ENCODE measurements at regions of chr11 and their contacts with region 1.

Region 1: DNA sequence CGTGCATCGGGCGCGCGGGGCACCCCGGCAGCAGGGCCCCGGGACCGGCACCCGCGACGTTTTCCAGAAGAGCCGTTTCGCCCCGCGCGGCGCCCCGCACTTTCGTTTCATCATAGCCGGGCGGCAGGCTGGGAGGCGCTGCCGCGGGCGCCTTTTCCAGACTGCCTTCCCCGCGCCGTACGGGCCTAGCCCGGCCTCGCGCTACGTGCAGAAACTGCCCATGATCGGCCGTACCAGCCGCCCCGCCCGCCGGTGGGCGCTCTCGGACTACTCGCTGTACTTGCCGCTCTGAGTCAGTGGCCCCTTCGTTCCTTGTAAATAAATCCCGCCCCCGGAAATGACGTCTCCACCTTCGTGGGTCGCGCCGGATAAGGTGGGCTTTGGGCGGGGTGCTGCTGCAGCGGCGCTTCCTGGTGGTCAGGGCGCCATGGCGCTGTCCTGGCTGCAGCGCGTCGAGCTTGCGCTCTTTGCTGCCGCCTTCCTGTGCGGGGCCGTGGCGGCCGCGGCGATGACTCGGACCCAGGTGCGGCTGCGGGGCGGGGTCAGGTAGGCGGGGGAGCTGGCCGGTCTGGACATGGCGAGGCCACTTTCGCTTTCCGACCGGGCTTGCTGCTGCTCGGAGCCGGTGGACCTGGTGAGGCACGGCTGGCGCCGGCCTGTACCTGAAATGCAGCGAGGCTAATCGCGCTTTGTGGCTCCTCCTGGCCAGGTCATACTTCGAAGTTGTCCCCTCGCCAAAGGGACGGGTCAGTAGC is at the start of gene TMEM179B:
- DNase-seq: peak; percentile 100
- ATAC-seq: peak; percentile 75
- H3K4me3 Mint-ChIP-seq: peak within 1 kb of the TSS; percentile 95
- H3K27ac Mint-ChIP-seq: peak within 1 kb of the TSS; percentile 95
- H3K4me1 Mint-ChIP-seq: peaks cover 41% of the 10 kb centered on the region
- H3K27me3 Mint-ChIP-seq: no peaks in the 10 kb centered on the region
- CTCF ChIP-seq: peak; percentile 69
- total RNA-seq, gene TMEM179B: 18.6 to 19.5 TPM

Region 2: GRCh38 chr11:62726915-62727763 is 60.0 kb before region 1 on chr11 and contains the start of gene HNRNPUL2:
- CTCF ChIA-PET with region 1: interaction called, 11 read pairs
- POLR2A ChIA-PET with region 1: interaction called, 5 read pairs
- intact Hi-C with region 1: no loop called
- DNase-seq: peak; percentile 98
- ATAC-seq: peak; percentile 92
- H3K4me3 Mint-ChIP-seq: peak within 1 kb of the TSS; percentile 95
- H3K27ac Mint-ChIP-seq: peak within 1 kb of the TSS; percentile 99
- H3K4me1 Mint-ChIP-seq: peaks cover 43% of the 10 kb centered on the region
- H3K27me3 Mint-ChIP-seq: no peaks in the 10 kb centered on the region
- CTCF ChIP-seq: no peak
- total RNA-seq, gene HNRNPUL2: 54.9 to 58.6 TPM

Region 3: DNA sequence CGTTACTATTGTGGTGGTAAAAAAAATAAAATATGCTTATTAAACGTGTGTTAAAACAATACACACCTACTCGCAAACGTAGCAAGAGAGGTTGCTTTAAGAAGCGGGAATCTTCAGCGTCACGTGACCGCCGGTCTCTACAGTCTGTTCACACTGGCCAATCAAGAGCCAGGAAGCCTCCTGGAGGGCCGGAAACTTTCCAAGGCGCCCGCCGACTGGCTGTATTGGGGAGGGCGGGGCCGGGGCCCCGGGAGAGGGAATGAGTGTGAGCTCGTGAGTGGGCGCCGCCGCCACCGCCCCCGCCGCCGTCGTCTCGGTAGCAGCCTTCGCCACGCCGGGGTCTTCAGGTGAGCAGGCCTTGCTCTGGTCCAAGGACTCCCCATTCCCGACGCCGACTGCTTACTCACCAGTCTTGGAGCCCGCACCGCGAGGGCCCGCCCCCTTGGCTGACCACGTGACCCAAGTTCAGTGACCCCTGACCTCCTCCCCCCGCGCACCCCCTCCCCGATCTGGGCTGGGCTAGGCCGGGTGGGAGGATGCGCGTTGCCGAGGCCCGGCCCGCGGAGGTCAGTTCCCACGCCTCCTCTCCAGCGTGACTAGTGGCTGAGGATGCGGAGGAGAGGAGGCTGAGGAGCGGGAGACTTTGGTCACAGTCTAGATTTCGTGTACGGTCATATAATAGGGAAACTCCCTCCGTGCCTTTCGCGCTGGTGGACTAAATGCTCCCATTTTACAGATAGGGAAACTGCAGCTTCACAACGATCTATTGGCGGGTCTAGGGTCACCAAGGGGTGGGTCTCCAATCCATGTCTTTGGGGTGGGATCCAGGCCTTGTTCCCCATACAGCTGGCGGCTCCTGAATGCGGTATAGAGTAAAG is 15.8 kb before region 1 on chr11 and contains the start of gene TAF6L:
- CTCF ChIA-PET with region 1: interaction called, 74 read pairs
- POLR2A ChIA-PET with region 1: interaction called, 25 read pairs
- intact Hi-C with region 1: no loop called
- DNase-seq: peak; percentile 97
- ATAC-seq: peak; percentile 88
- H3K4me3 Mint-ChIP-seq: peak within 1 kb of the TSS; percentile 81
- H3K27ac Mint-ChIP-seq: peak within 1 kb of the TSS; percentile 93
- H3K4me1 Mint-ChIP-seq: peaks cover 21% of the 10 kb centered on the region
- H3K27me3 Mint-ChIP-seq: no peaks in the 10 kb centered on the region
- CTCF ChIP-seq: no peak
- total RNA-seq, gene TAF6L: 13.7 to 16.7 TPM

Region 4: DNA sequence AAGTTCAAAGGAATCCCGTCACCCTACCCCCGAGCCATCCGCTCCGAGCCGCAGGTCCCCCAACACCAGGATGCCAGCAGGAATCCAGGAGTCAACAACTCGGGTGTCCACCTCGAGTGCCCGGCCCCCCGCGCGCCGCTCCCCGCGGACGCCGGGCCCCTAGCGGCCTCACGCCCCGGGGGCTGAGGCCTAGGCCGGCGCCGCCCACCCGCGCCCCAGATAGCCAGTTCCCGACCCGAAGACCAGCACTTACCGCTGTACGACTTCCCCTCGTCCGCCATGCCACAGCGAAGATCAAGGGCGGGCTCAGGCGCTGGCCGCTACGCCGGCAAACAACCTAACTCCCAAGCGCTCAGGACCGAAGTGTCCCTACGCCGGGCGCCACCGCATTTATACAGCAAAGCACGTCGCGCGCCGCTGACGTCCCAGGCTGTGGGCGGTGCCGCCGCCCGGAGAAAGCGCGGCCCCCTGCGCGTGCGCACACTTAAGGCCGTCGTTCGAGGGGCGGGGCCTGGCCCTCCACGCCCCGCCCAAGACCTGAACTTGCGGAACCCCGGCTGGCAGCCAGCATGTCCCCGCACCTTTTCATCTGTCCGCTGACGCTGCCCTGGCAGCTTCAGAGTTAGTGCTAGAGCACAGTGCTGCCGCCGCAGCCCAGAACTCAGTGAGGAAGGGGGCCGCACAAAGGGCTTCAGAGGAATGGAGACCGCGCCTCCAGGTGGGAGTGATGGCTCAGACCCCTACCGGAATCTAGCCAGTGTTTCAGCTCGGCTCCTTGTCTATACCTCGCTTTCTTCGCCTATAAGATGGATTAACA is 18.1 kb after region 1 on chr11 and contains the start of gene NXF1:
- CTCF ChIA-PET with region 1: interaction called, 28 read pairs
- POLR2A ChIA-PET with region 1: interaction called, 228 read pairs
- intact Hi-C with region 1: no loop called
- DNase-seq: peak; percentile 95
- ATAC-seq: peak; percentile 85
- H3K4me3 Mint-ChIP-seq: peak within 1 kb of the TSS; percentile 95
- H3K27ac Mint-ChIP-seq: peak within 1 kb of the TSS; percentile 98
- H3K4me1 Mint-ChIP-seq: peaks cover 38% of the 10 kb centered on the region
- H3K27me3 Mint-ChIP-seq: no peaks in the 10 kb centered on the region
- CTCF ChIP-seq: peak; percentile 31
- total RNA-seq, gene NXF1: 80.9 to 90.0 TPM

Region 5: DNA sequence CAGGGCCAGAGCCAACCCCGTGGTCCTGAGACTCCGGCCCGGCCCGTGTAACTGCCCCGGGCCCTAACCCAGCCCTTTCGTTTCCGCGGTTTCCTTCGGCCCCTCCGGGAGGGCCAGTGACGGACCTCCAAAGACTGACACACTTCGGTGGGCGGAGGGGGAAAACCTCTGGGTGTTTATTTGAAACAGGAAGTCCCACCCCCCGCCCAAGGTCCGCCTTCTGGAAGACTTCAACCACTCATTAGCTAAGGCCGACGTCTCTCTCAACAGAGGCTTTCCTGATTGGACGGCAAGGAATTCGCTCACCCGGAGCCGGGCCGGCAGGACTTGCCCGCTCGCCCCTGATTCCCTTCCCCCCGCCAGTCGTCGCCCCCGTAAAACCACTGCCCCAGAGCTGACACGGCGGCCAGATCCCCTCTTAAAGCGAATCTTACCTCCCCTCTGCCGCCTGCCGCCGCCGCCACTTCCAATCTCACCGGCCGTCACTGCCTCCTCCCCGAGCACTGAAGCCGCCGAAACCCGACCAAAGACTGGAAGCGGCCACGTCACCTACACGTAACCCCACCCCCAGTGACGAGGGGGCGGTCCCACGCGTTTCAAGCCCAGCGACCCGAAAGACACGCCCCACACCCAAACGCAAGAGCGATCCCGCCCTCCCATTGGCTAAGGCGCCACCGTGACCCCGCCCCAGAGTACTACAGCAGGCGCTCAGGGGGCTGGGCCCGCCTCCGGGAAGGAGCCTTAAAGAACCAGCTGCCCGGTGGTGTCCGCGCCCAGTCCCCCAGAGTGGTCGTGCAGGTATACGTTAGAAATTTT is 44.5 kb after region 1 on chr11 and contains the start of gene STX5:
- CTCF ChIA-PET with region 1: interaction called, 34 read pairs
- POLR2A ChIA-PET with region 1: interaction called, 38 read pairs
- intact Hi-C with region 1: loop called (anchors 5 kb)
- DNase-seq: peak; percentile 100
- ATAC-seq: peak; percentile 95
- H3K4me3 Mint-ChIP-seq: peak within 1 kb of the TSS; percentile 88
- H3K27ac Mint-ChIP-seq: peak within 1 kb of the TSS; percentile 95
- H3K4me1 Mint-ChIP-seq: peaks cover 47% of the 10 kb centered on the region
- H3K27me3 Mint-ChIP-seq: no peaks in the 10 kb centered on the region
- CTCF ChIP-seq: no peak
- total RNA-seq, gene STX5: 22.0 to 22.8 TPM

Region 6: GRCh38 chr11:62880803-62881578 is 93.8 kb after region 1 on chr11 and contains the start of gene SLC3A2:
- CTCF ChIA-PET with region 1: interaction called, 14 read pairs
- POLR2A ChIA-PET with region 1: interaction called, 23 read pairs
- intact Hi-C with region 1: loop called (anchors 5 kb)
- DNase-seq: peak; percentile 91
- ATAC-seq: peak; percentile 76
- H3K4me3 Mint-ChIP-seq: peak within 1 kb of the TSS; percentile 99
- H3K27ac Mint-ChIP-seq: peak within 1 kb of the TSS; percentile 100
- H3K4me1 Mint-ChIP-seq: peaks cover 41% of the 10 kb centered on the region
- H3K27me3 Mint-ChIP-seq: no peaks in the 10 kb centered on the region
- CTCF ChIP-seq: peak; percentile 71
- total RNA-seq, gene SLC3A2: 299 to 315 TPM

Region 7: DNA sequence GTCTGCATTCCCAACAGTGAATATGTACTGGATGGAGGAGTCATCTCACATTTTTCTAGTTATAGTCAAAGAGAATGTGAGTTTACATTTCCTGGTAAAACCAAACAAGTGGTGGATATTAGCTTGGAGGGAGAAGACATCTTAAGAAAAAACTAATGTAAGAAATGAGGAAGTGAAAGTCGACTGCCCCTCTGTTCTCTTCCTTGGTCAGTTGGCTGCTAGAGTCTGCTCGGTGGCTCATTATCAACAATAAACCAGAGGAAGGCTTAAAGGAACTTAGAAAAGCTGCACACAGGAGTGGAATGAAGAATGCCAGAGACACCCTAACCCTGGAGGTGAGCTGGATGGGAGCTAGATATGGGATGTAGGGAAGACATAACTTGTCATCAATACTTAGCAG is 588.3 kb after region 1 on chr11:
- CTCF ChIA-PET with region 1: no interaction called
- POLR2A ChIA-PET with region 1: no interaction called
- intact Hi-C with region 1: no loop called
- DNase-seq: no peak
- ATAC-seq: no peak
- H3K4me3 Mint-ChIP-seq: no peak overlapping the region
- H3K27ac Mint-ChIP-seq: no peak overlapping the region
- H3K4me1 Mint-ChIP-seq: no peaks in the 10 kb centered on the region
- H3K27me3 Mint-ChIP-seq: peaks cover 17% of the 10 kb centered on the region
- CTCF ChIP-seq: no peak